ENCODE measurements at regions of chr10 and their contacts with region 1.

Region 1: DNA sequence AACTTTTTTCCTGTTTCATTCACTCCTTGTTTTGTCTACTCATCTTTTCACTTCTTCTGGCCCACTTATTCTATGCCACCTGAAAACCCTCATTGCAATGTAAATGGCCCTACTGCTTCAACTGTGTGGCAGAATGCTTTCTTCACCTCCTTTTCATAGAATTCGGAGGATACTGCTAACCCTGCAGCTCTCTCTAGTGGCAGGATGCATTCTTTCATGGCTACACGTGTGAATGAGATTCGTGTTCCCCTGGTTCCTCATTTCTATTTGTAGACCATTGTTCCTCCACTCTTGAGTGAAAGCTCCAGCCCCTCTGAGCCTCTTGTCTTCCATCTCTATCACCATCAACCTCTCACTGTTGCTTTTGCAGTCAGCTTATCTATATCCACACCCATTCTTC is 20.9 kb upstream of the CYP26C1 start:
- DNase-seq: peak; percentile 29
- H3K4me3 ChIP-seq: no peak overlapping the region
- H3K27ac ChIP-seq: no peak overlapping the region
- H3K4me1 ChIP-seq: peaks cover 4% of the 10 kb centered on the region
- H3K27me3 ChIP-seq: no peaks in the 10 kb centered on the region
- CTCF ChIP-seq: peak; percentile 56 to 81

Region 2: DNA sequence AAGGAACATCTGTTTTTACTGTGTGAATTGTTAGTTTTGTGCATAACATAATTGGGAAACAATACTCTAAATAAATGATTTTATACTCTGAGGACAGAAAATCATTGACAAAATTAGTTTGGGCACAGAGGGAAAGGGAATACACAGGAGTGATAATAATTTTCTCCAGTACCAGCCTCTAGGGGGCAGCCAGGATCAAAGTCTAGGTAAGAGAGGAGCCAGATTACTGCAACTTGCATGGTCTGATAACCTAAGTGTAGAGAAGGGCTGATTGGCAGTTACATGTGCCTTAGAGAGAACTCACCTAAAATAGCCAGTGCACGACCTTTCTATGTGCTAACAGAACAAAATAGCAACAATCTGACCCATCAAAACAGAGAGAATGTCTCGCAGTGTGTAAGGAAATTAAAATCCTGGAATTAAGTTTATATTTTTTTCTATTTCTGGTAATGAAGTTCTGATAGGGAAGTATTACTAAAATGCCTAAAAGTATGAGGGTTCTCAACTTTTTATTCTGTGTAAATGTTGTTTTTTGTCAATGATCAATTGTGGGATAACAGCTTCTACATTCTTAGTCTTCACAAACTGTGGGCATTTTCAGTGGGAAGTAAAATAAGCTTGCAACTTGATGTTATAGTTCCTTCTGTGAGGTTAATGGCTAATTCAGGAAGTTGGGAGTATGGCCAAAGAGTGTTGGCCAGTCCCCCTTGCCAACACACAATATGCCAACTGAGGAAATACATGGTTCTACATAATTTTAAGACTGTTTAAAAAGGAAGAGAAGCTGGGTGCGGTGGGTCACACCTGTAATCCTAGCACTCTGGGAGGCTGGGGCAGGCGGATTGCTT is 125.0 kb before region 1 on chr10:
- CTCF ChIA-PET with region 1: no interaction called
- dilution Hi-C with region 1: no loop called
- in situ Hi-C with region 1: no loop called
- intact Hi-C with region 1: loop called (anchors 2 kb)
- DNase-seq: peak; percentile 30
- H3K4me3 ChIP-seq: no peak overlapping the region
- H3K27ac ChIP-seq: no peak overlapping the region
- H3K4me1 ChIP-seq: no peaks in the 10 kb centered on the region
- H3K27me3 ChIP-seq: no peaks in the 10 kb centered on the region
- CTCF ChIP-seq: peak; percentile 73 to 79

Region 3: DNA sequence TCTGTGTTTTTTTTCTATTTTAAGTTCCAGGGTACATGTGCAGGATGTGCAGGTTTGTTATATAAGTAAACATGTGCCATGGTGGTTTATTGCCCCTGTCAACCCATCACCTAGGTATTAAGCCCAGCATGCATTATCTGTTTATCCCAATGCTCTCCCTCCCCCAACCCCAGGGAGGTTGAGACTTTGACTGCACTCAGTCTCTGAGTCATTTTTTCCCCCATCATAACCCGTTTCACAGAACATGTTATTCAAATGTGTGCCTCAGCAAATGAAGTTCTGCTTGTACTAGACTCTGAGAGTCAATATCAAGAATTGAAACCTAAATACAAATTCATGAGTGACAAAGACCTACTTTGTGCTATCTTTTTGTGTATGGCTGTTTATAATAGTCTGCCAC is 49.1 kb before region 1 on chr10:
- CTCF ChIA-PET with region 1: no interaction called
- dilution Hi-C with region 1: no loop called
- in situ Hi-C with region 1: no loop called
- intact Hi-C with region 1: no loop called
- DNase-seq: no peak
- H3K4me3 ChIP-seq: no peak overlapping the region
- H3K27ac ChIP-seq: no peak overlapping the region
- H3K4me1 ChIP-seq: no peaks in the 10 kb centered on the region
- H3K27me3 ChIP-seq: no peaks in the 10 kb centered on the region
- CTCF ChIP-seq: no peak

Region 4: GRCh38 chr10:93006435-93007039 is 33.2 kb before region 1 on chr10:
- CTCF ChIA-PET with region 1: no interaction called
- dilution Hi-C with region 1: no loop called
- in situ Hi-C with region 1: no loop called
- intact Hi-C with region 1: loop called (anchors 1 kb)
- DNase-seq: peak; percentile 35
- H3K4me3 ChIP-seq: no peak overlapping the region
- H3K27ac ChIP-seq: no peak overlapping the region
- H3K4me1 ChIP-seq: no peaks in the 10 kb centered on the region
- H3K27me3 ChIP-seq: no peaks in the 10 kb centered on the region
- CTCF ChIP-seq: peak; percentile 72 to 74